Activated B cell treated with CpG ODN at 0.5 μM for 24 hours (primary cell): ENCODE measurements at regions of chr19 and their contacts with region 1.

Region 1: DNA sequence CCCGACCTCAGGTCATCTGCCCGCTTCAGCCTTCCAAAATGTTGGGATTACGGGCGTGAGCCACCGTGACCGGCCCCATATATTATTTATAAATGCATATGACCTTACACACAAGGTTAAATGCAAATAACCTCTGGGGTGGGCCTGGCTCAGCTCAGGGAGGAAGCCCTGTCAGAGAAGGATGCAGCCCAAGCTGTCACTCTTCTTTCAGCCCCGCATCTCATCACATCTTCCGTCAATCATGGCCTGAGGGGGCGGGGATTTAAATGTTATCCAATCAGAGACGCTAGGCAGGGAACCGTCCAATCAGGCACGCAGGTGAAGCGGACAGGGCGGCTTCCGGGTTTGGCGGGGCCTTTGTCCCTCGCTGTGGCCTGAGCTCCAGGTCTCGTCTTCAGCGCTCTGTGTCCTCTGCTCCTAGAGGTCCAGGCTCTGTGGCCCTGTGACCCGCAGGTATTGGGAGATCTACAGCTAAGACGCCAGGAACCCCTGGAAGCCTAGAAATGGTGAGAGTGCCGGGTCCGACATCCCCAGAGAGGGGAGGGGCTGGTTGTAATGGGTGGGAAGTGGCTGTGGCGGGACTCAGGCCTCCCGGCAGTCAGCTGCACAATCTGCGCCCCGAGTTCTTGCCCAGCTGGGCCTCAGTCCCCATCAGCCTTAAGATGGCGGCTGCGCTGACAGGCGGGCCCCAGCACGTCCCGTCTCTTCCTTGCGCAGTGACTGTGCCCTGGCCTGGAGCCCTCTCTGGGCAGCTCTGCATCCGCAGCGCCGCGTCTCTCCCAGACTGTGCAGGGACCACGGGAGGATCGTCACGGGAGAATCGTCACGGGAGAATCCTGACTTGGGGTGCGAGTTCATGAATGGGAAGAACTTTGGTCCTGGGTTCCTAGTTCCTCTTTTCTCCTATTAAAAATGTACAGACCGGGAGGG is at the start of gene ZNF430:
- DNase-seq: peak; percentile 77
- ATAC-seq: peak; percentile 95
- H3K4me3 Mint-ChIP-seq: peak within 1 kb of the TSS; percentile 100
- H3K27ac Mint-ChIP-seq: peak within 1 kb of the TSS; percentile 100
- H3K4me1 Mint-ChIP-seq: peaks cover 50% of the 10 kb centered on the region
- H3K27me3 Mint-ChIP-seq: no peaks in the 10 kb centered on the region
- CTCF ChIP-seq: no peak
- total RNA-seq, gene ZNF430: 36.4 and 39.8 TPM in 2 replicates

Region 2: GRCh38 chr19:20167020-20167644 is 853.4 kb before region 1 on chr19 and contains the start of gene ZNF486:
- CTCF ChIA-PET with region 1: no interaction called
- POLR2A ChIA-PET with region 1: interaction called, 4 read pairs
- intact Hi-C with region 1: loop called (anchors 1 kb)
- DNase-seq: peak; percentile 80
- ATAC-seq: peak; percentile 96
- H3K4me3 Mint-ChIP-seq: peak within 1 kb of the TSS; percentile 99
- H3K27ac Mint-ChIP-seq: peak within 1 kb of the TSS; percentile 97
- H3K4me1 Mint-ChIP-seq: peaks cover 59% of the 10 kb centered on the region
- H3K27me3 Mint-ChIP-seq: no peaks in the 10 kb centered on the region
- CTCF ChIP-seq: no peak
- total RNA-seq, gene ZNF486: 13.5 and 16.2 TPM in 2 replicates

Region 3: GRCh38 chr19:20661150-20661819 is 359.3 kb before region 1 on chr19 and contains the start of gene ZNF626:
- CTCF ChIA-PET with region 1: no interaction called
- POLR2A ChIA-PET with region 1: interaction called, 12 read pairs
- intact Hi-C with region 1: loop called (anchors 10 kb)
- DNase-seq: peak; percentile 80
- ATAC-seq: peak; percentile 98
- H3K4me3 Mint-ChIP-seq: peak within 1 kb of the TSS; percentile 95
- H3K27ac Mint-ChIP-seq: peak within 1 kb of the TSS; percentile 95
- H3K4me1 Mint-ChIP-seq: peaks cover 49% of the 10 kb centered on the region
- H3K27me3 Mint-ChIP-seq: no peaks in the 10 kb centered on the region
- CTCF ChIP-seq: no peak
- total RNA-seq, gene ZNF626: 16.1 and 17.2 TPM in 2 replicates

Region 4: GRCh38 chr19:20999731-21000352 is 20.7 kb before region 1 on chr19:
- CTCF ChIA-PET with region 1: no interaction called
- POLR2A ChIA-PET with region 1: interaction called, 33 read pairs
- intact Hi-C with region 1: loop called (anchors 1 kb)
- DNase-seq: peak; percentile 74
- ATAC-seq: peak; percentile 100
- H3K4me3 Mint-ChIP-seq: peak overlapping the region; percentile 91
- H3K27ac Mint-ChIP-seq: peak overlapping the region; percentile 70
- H3K4me1 Mint-ChIP-seq: peaks cover 6% of the 10 kb centered on the region
- H3K27me3 Mint-ChIP-seq: no peaks in the 10 kb centered on the region
- CTCF ChIP-seq: no peak

Region 5: GRCh38 chr19:21233691-21234090 is 213.1 kb after region 1 on chr19:
- CTCF ChIA-PET with region 1: no interaction called
- POLR2A ChIA-PET with region 1: no interaction called
- intact Hi-C with region 1: no loop called
- DNase-seq: no peak
- ATAC-seq: no peak
- H3K4me3 Mint-ChIP-seq: no peak overlapping the region
- H3K27ac Mint-ChIP-seq: no peak overlapping the region
- H3K4me1 Mint-ChIP-seq: no peaks in the 10 kb centered on the region
- H3K27me3 Mint-ChIP-seq: no peaks in the 10 kb centered on the region
- CTCF ChIP-seq: no peak

Region 6: GRCh38 chr19:21328885-21329605 is 308.5 kb after region 1 on chr19 and contains the start of gene ZNF708:
- CTCF ChIA-PET with region 1: no interaction called
- POLR2A ChIA-PET with region 1: interaction called, 4 read pairs
- intact Hi-C with region 1: loop called (anchors 5 kb)
- DNase-seq: peak; percentile 55
- ATAC-seq: peak; percentile 99
- H3K4me3 Mint-ChIP-seq: peak within 1 kb of the TSS; percentile 99
- H3K27ac Mint-ChIP-seq: peak within 1 kb of the TSS; percentile 99
- H3K4me1 Mint-ChIP-seq: peaks cover 39% of the 10 kb centered on the region
- H3K27me3 Mint-ChIP-seq: no peaks in the 10 kb centered on the region
- CTCF ChIP-seq: no peak
- total RNA-seq, gene ZNF708: 24.3 and 30.6 TPM in 2 replicates

Region 7: DNA sequence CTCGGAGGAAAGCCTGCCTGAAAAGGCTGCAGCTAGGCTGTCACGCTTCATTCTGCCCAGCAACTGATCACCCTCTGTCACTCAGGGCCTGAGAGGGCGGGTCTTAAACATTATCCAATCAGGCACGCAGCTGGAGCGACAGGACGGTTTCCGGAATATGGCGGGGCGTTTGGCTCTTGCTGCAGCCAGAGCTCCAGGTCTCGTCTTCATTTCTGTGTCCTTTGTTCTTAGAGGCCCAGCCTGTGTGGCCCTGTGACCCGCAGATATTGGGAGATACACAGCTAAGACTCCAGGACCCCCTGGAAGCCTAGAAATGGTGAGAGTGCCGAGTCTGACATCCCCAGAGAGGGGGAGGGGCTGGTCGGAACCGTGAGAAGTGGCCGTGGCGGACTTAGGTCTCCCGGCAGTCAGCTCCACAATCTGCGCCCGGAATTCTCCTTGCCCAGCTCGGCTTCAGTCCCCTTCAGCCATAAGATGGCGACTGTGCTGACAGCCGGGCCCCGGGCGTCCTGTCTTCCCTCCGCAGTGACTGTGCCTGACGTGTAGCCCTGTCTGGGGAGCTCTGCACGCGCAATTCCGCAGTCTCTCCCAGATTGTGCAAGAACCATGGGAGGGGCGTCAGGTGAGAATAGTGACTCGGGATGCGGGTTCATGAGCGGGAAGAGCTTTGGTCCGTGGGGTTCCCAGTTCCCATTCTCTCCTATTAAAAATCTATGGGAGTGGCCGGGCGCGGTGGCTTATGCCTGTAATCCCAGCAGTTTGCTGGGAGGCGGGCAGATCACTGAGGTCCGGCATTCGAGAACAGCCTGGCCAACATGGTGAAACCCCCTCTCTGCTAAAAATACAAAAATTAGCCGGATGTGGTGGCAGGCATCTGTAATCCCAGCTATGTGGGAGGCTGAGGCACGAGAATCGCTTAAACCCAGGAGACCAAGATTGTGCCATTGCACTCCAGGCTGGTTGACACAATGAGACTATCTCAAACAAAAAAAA is 485.2 kb after region 1 on chr19 and contains the start of gene ZNF429:
- CTCF ChIA-PET with region 1: no interaction called
- POLR2A ChIA-PET with region 1: interaction called, 21 read pairs
- intact Hi-C with region 1: no loop called
- DNase-seq: peak; percentile 73
- ATAC-seq: peak; percentile 99
- H3K4me3 Mint-ChIP-seq: peak within 1 kb of the TSS; percentile 100
- H3K27ac Mint-ChIP-seq: peak within 1 kb of the TSS; percentile 99
- H3K4me1 Mint-ChIP-seq: peaks cover 38% of the 10 kb centered on the region
- H3K27me3 Mint-ChIP-seq: no peaks in the 10 kb centered on the region
- CTCF ChIP-seq: no peak
- total RNA-seq, gene ZNF429: 19.5 and 19.9 TPM in 2 replicates